Activated naive CD4-positive, alpha-beta T cell treated with anti-CD3 and anti-CD28 coated beads, Interleukin-2, amount 10 ng/mL, durations not matched to agents 7 days and 5 days (primary cell): ENCODE measurements at regions of chr1 and their contacts with region 1.

Region 1: DNA sequence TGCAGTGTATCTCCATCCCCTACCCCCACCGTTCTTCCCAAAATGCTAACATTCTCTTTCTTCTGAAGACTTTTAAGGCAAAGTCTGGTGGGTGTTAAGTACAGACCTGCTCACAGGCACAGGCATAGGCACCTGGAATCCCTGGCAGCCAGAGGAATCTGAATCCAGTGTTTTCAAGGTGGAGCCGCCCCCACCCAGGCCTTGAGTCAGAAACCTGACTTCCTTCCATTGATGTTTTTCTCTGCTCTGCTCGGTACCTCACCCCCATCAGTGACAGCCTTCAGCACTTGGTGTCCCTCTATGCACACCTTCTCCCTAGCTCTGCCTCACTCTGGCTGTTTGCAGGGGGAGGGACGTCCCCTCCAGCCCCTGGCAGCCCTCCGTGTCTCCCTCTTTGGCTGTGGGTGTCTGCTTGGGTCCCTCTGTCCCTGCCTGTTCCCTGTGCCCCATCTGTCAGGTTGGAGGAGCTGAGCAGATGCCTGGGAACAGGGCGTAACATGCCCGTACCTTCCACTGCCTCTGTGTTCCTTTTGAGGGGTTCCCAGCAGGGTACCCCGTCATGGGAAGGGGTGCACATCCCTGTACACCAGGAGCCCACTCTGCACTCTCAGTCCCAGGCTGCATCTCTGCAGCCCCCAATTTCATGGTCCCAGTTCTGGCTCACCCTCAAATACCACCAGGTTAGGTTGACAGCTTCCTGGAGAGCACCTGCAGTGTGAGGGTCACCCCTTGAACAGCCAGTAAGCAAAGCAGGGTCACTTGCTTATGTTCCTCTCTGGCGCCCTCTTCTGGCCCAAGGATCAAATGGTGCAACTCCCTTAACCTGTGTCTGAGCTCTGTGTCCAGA is 6.7 kb downstream of the NCDN start:
- DNase-seq: peak; percentile 91
- H3K4me3 Mint-ChIP-seq: no peak overlapping the region
- H3K27ac Mint-ChIP-seq: no peak overlapping the region
- H3K4me1 Mint-ChIP-seq: peaks cover 16% of the 10 kb centered on the region
- H3K27me3 Mint-ChIP-seq: no peaks in the 10 kb centered on the region

Region 2: GRCh38 chr1:35361638-35362037 is 202.6 kb before region 1 on chr1:
- CTCF ChIA-PET with region 1: no interaction called
- DNase-seq: no peak
- H3K4me3 Mint-ChIP-seq: no peak overlapping the region
- H3K27ac Mint-ChIP-seq: no peak overlapping the region
- H3K4me1 Mint-ChIP-seq: peaks cover 11% of the 10 kb centered on the region
- H3K27me3 Mint-ChIP-seq: no peaks in the 10 kb centered on the region

Region 3: DNA sequence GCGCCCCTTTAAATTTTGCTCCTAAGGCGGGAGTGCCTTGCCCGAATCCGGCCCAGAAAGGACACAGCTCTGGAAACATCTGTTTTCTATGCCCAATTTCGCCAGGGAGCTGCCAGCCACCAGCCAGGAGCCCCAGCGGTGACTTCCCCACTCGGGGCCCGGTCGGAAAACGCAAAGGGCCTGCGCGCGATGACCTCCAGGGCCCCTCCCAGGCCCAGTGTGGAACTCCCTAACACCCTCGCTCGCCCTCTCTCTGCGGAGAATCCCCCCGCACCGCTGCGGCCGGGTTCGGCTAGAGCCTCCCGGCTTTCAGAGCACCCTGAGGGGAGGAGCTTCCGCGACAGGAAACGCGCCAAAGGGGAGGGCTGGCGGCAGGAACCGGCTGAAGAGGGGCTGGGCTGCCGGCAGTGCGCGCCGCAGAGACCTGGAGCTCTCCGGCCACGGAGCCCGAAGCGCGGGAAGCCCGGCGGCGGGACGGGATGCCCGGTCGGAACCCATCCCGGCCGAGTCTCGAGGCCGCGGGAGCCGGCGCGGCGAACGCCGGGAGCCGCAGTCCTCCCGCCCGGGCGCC is 205.0 kb after region 1 on chr1:
- CTCF ChIA-PET with region 1: interaction called, 11 read pairs
- DNase-seq: peak; percentile 93
- H3K4me3 Mint-ChIP-seq: peak overlapping the region; percentile 99
- H3K27ac Mint-ChIP-seq: peak overlapping the region; percentile 85
- H3K4me1 Mint-ChIP-seq: peaks cover 42% of the 10 kb centered on the region
- H3K27me3 Mint-ChIP-seq: no peaks in the 10 kb centered on the region

Region 4: GRCh38 chr1:35788139-35788538 is 223.9 kb after region 1 on chr1:
- CTCF ChIA-PET with region 1: no interaction called
- DNase-seq: no peak
- H3K4me3 Mint-ChIP-seq: no peak overlapping the region
- H3K27ac Mint-ChIP-seq: no peak overlapping the region
- H3K4me1 Mint-ChIP-seq: no peaks in the 10 kb centered on the region
- H3K27me3 Mint-ChIP-seq: peaks cover 6% of the 10 kb centered on the region